Activated T-helper 1 cell treated with anti-CD3 and anti-CD28 coated beads, Interleukin-12 subunit alpha, Interleukin-12 subunit beta, Interleukin-2, Interleukin-4 antibody, amounts not matched to agents 30 ng/mL and 10 ng/mL and 1 ng/mL, durations not matched to agents 14 hours and 24 hours and 36 hours (primary cell): ENCODE measurements at regions of chr5 and their contacts with region 1.

Region 1: DNA sequence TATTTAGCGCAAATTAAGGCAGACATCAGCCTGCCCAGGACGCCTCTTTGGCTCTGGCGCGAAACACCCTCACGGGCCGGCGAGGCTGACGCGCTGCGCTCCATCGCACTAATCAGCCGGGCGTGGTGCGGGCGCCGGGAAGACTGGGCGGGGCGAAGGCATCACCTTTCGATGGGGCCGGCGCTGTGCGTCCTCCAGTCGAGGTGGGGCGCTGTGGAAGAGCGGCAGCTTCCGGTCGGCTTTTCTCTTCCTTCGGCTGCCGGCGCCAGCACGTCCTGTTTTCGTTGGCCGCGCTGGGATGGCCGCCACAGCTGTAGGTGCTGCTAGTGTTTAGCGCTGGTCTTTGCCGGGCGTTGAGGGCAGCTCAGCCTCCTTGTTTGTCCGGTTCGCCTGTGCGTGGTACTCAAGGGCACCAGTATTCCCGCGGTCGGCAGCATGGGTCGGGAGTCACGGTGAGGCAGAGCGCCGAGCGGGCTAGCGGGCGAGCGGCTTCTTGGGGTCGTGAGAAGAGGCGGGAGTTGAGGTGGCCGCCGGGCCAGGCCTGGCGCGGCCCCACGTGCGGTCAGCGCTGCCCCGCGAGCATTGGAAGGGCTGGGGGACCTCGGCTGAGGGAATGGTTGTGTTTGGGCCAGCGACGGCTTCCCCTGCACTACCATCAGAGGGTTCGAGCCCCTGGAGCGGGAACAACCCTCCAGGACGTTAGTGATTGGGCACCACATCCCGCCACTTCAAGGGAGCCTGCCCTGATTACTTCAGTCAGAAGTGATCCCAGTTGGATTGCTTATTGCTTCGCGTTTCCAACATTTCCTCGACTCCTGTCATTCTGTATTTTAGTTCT is at the start of gene DDX46:
- DNase-seq: peak; percentile 94
- H3K4me3 Mint-ChIP-seq: peak within 1 kb of the TSS; percentile 100
- H3K27ac Mint-ChIP-seq: peak within 1 kb of the TSS; percentile 99
- H3K4me1 Mint-ChIP-seq: peaks cover 28% of the 10 kb centered on the region
- H3K27me3 Mint-ChIP-seq: no peaks in the 10 kb centered on the region
- total RNA-seq, gene DDX46: 78.3 and 84.4 TPM in 2 replicates

Region 2: GRCh38 chr5:134176511-134177368 is 582.0 kb before region 1 on chr5 and contains the start of gene SKP1:
- intact Hi-C with region 1: loop called (anchors 1 kb)
- DNase-seq: peak; percentile 85
- H3K4me3 Mint-ChIP-seq: peak within 1 kb of the TSS; percentile 96
- H3K27ac Mint-ChIP-seq: peak within 1 kb of the TSS; percentile 97
- H3K4me1 Mint-ChIP-seq: peaks cover 28% of the 10 kb centered on the region
- H3K27me3 Mint-ChIP-seq: peaks cover 6% of the 10 kb centered on the region
- total RNA-seq, gene SKP1: 259 and 265 TPM in 2 replicates

Region 3: GRCh38 chr5:134873987-134874830 is 115.5 kb after region 1 on chr5 and contains the start of gene TXNDC15:
- intact Hi-C with region 1: loop called (anchors 1 kb)
- DNase-seq: peak; percentile 82
- H3K4me3 Mint-ChIP-seq: peak within 1 kb of the TSS; percentile 100
- H3K27ac Mint-ChIP-seq: peak within 1 kb of the TSS; percentile 98
- H3K4me1 Mint-ChIP-seq: peaks cover 43% of the 10 kb centered on the region
- H3K27me3 Mint-ChIP-seq: no peaks in the 10 kb centered on the region
- total RNA-seq, gene TXNDC15: 57.1 and 67.2 TPM in 2 replicates